ENCODE measurements at regions of chr1 and their contacts with region 1.

Region 1: GRCh38 chr1:160726498-160727315 is 12.3 kb upstream of the SLAMF7 start:
- DNase-seq: peak; percentile 54
- H3K4me3 Mint-ChIP-seq: no peak overlapping the region
- H3K27ac Mint-ChIP-seq: no peak overlapping the region
- H3K4me1 Mint-ChIP-seq: peaks cover 30% of the 10 kb centered on the region
- H3K27me3 Mint-ChIP-seq: no peaks in the 10 kb centered on the region

Region 2: GRCh38 chr1:160755911-160756848 is 29.5 kb after region 1 on chr1:
- intact Hi-C with region 1: no loop called
- DNase-seq: no peak
- H3K4me3 Mint-ChIP-seq: no peak overlapping the region
- H3K27ac Mint-ChIP-seq: peak overlapping the region; percentile 54
- H3K4me1 Mint-ChIP-seq: peaks cover 41% of the 10 kb centered on the region
- H3K27me3 Mint-ChIP-seq: no peaks in the 10 kb centered on the region

Region 3: GRCh38 chr1:160830321-160831153 is 103.8 kb after region 1 on chr1:
- intact Hi-C with region 1: loop called (anchors 2 kb)
- DNase-seq: peak; percentile 59
- H3K4me3 Mint-ChIP-seq: no peak overlapping the region
- H3K27ac Mint-ChIP-seq: no peak overlapping the region
- H3K4me1 Mint-ChIP-seq: peaks cover 13% of the 10 kb centered on the region
- H3K27me3 Mint-ChIP-seq: no peaks in the 10 kb centered on the region

Region 4: DNA sequence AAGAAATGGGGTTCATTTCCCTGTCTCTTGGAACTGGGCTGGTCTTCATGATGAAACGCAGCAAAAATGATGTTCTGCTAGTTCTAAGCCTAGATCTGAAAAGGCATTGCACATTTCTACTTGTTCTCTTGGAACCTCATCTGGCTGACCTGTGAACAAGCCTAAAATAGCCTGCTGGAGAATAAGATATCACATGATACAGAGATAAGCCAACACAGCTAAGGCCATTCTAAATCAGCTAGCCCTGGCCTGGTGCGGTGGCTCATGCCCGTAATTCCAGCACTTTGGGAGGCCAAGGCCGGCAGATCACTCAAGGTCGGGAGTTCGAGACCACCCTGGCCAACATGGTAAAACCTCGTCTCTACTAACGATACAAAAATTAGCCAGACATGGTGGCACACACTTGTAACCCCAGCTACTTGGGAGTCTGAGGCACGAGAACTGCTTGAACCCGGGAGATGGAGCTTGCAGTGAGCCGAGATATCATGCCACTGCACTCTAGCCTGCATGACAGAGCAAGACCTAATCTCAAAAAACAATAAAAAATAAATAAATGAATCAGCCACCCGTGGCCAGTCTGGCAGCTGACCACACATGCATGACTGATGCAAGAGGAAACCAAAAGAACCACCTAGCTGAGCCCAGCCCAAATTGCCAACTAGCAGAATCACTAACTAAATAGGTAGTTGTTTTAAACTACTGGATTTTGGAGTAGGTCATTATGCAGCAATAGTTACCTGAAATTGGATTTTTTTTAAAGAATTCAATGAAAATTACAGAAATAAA is 117.9 kb after region 1 on chr1:
- intact Hi-C with region 1: no loop called
- DNase-seq: no peak
- H3K4me3 Mint-ChIP-seq: no peak overlapping the region
- H3K27ac Mint-ChIP-seq: no peak overlapping the region
- H3K4me1 Mint-ChIP-seq: peaks cover 8% of the 10 kb centered on the region
- H3K27me3 Mint-ChIP-seq: peaks cover 25% of the 10 kb centered on the region

Region 5: DNA sequence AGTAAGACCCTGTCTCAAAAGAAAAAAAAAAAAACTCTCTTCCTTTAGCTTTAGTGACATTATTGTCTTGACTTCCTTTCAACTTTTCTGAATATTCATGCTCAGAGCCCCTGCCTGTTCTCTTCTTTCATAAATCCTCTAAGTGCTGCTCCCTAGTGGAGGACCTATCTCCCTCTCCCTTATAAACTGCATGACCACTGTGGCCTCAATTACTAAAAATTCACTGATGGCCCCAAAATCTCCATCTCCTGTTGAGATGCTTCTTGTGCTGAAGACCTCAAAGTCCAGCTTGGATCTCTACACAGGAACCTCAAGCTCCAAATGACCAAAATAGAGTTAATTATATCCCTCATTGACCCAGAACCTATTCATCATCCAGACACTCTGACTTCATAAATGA is 150.5 kb after region 1 on chr1:
- intact Hi-C with region 1: loop called (anchors 2 kb)
- DNase-seq: no peak
- H3K4me3 Mint-ChIP-seq: no peak overlapping the region
- H3K27ac Mint-ChIP-seq: no peak overlapping the region
- H3K4me1 Mint-ChIP-seq: peaks cover 10% of the 10 kb centered on the region
- H3K27me3 Mint-ChIP-seq: peaks cover 5% of the 10 kb centered on the region

Region 6: GRCh38 chr1:160951443-160952128 is 224.9 kb after region 1 on chr1:
- intact Hi-C with region 1: loop called (anchors 1 kb)
- DNase-seq: peak; percentile 59
- H3K4me3 Mint-ChIP-seq: no peak overlapping the region
- H3K27ac Mint-ChIP-seq: no peak overlapping the region
- H3K4me1 Mint-ChIP-seq: peaks cover 7% of the 10 kb centered on the region
- H3K27me3 Mint-ChIP-seq: no peaks in the 10 kb centered on the region

Measured in activated T-helper 2 cell treated with anti-CD3 and anti-CD28 coated beads, Interferon-gamma antibody, Interleukin-2, Interleukin-4, amounts not matched to agents 10 μg/mL and 5 μg/mL and 100 μg/mL, durations not matched to agents 14 hours and 24 hours and 36 hours (primary cell).